Heart left ventricle (tissue), 16 donors: ENCODE measurements at regions of chr1 and their contacts with region 1.

Region 1: DNA sequence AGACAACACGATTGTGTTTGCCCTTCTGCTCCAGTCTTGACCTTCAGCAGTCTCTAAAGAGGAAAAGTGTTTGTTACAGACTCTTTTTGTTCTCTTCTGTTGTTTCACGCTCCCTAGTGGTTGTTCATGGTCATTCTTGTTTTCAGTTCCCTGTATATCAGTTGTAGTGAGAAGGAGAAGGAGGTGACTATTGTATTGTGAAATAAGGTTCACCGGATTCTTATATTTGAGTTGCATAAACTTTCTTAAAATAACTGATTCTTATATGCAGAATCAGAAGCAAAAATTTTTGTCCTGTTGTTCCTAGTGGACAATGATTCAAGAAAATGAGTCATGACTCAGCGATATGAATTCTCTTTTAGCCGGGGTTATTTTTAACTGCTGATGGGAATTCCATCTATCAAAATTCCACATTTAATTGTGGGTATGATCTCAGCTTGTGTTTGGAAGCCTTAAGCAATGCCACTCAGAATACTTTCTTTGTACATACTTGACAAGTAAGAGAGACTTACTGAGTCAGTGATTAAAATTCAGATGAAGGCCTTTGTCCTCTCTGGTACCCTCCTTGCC is 152.2 kb downstream of the CLEC20A start:
- DNase-seq: no peak
- ATAC-seq: peak; percentile 63 to 83 (median 82)
- H3K4me3 ChIP-seq: peak overlapping the region in 6 of 12 donors; percentile 3 to 12 (median 5)
- H3K27ac ChIP-seq: peak overlapping the region; percentile 69 to 93 (median 83)
- H3K4me1 ChIP-seq: peaks cover 0 to 60% (median 28%) of the 10 kb centered on the region in 12 donors
- H3K27me3 ChIP-seq: no peaks in the 10 kb centered on the region
- CTCF ChIP-seq: peak; percentile 28 to 71 (median 50)
- POLR2A ChIP-seq: no peak

Region 2: GRCh38 chr1:178232947-178233346 is 111.7 kb before region 1 on chr1:
- intact Hi-C with region 1: no loop called
- DNase-seq: no peak
- ATAC-seq: no peak
- H3K4me3 ChIP-seq: no peak overlapping the region
- H3K27ac ChIP-seq: no peak overlapping the region
- H3K4me1 ChIP-seq: peaks cover 0 to 13% (median 0%) of the 10 kb centered on the region in 12 donors
- H3K27me3 ChIP-seq: no peaks in the 10 kb centered on the region
- CTCF ChIP-seq: no peak
- POLR2A ChIP-seq: no peak

Region 3: DNA sequence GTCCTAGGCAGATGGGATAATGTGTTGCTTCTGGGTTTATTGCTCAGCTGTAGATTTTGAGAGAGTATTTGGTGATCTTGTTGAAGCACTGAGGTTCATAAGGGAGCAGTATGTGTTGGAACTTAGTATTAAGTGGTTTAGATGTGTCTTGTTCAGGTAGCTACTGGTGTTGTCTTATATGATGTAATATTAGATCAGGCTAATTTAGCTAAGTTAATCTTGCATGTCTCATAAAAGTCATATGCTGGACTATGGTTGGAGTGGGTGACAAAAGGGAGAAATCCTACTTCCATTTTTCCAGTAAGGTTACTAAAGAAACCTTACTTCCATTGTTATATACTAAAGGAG is 44.3 kb before region 1 on chr1:
- intact Hi-C with region 1: loop called in 1 of 10 experiments (anchors 5 kb)
- DNase-seq: no peak
- ATAC-seq: no peak
- H3K4me3 ChIP-seq: no peak overlapping the region
- H3K27ac ChIP-seq: peak overlapping the region in 1 of 12 donors; percentile 31
- H3K4me1 ChIP-seq: peaks cover 0 to 37% (median 4%) of the 10 kb centered on the region in 12 donors
- H3K27me3 ChIP-seq: no peaks in the 10 kb centered on the region
- CTCF ChIP-seq: no peak
- POLR2A ChIP-seq: no peak

Region 4: GRCh38 chr1:178397678-178398077 is 53.1 kb after region 1 on chr1:
- intact Hi-C with region 1: no loop called
- DNase-seq: no peak
- ATAC-seq: no peak
- H3K4me3 ChIP-seq: no peak overlapping the region
- H3K27ac ChIP-seq: no peak overlapping the region
- H3K4me1 ChIP-seq: peaks cover 0 to 10% (median 0%) of the 10 kb centered on the region in 12 donors
- H3K27me3 ChIP-seq: no peaks in the 10 kb centered on the region
- CTCF ChIP-seq: no peak
- POLR2A ChIP-seq: no peak